Activated CD4-positive, alpha-beta memory T cell treated with anti-CD3 and anti-CD28 coated beads for 36 hours (primary cell): ENCODE measurements at regions of chr11 and their contacts with region 1.

Region 1: DNA sequence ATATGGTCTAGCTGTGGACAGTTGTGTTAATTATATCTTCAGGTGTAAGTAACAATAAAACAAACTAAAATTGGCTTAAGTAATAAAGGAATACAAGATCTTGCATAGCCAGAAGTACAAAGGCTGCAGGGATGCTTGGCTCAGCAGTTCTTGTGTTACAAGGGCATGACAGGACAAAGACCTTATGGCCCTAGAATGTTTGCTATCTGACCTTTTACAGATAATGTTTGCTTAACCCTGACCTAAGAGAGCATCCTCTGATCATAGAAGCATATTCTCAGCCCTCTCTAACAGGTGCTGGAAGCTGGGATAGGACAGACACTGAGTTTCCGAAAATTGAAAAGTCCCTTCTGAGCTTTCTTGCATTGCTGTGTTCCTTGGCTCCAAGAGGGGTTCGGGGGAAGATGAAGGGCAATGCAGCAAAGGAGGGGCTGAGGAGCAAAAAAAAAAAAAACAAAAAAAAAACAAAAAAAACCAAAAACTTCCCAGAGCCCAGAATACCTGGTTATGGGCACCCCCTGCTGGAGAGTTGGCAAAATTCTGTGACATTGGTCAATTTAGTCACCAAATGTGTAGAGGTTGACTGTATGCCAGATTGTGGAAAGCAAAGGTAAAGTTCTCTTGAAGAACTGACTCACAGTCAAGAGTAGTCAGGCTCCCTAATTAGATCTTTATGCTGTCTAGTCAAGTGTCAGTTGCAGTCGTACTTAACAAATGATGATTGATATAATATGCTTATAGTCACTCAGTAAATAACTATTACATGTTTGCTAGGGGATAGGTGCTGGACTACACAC is 10.4 kb upstream of the HIKESHI start:
- DNase-seq: peak; percentile 82
- H3K4me3 Mint-ChIP-seq: peak overlapping the region; percentile 30
- H3K27ac Mint-ChIP-seq: peak overlapping the region; percentile 95
- H3K4me1 Mint-ChIP-seq: peaks cover 68% of the 10 kb centered on the region
- H3K27me3 Mint-ChIP-seq: no peaks in the 10 kb centered on the region

Region 2: GRCh38 chr11:85854557-85855340 is 436.9 kb before region 1 on chr11:
- CTCF ChIA-PET with region 1: interaction called, 6 read pairs
- POLR2A ChIA-PET with region 1: interaction called, 3 read pairs
- intact Hi-C with region 1: loop called (anchors 2 kb)
- DNase-seq: peak; percentile 96
- H3K4me3 Mint-ChIP-seq: peak overlapping the region; percentile 86
- H3K27ac Mint-ChIP-seq: peak overlapping the region; percentile 87
- H3K4me1 Mint-ChIP-seq: peaks cover 10% of the 10 kb centered on the region
- H3K27me3 Mint-ChIP-seq: no peaks in the 10 kb centered on the region

Region 3: GRCh38 chr11:86014221-86014620 is 277.4 kb before region 1 on chr11:
- CTCF ChIA-PET with region 1: no interaction called
- POLR2A ChIA-PET with region 1: no interaction called
- intact Hi-C with region 1: no loop called
- DNase-seq: no peak
- H3K4me3 Mint-ChIP-seq: no peak overlapping the region
- H3K27ac Mint-ChIP-seq: peak overlapping the region; percentile 5
- H3K4me1 Mint-ChIP-seq: peaks cover 17% of the 10 kb centered on the region
- H3K27me3 Mint-ChIP-seq: no peaks in the 10 kb centered on the region

Region 4: GRCh38 chr11:86068951-86069407 is 222.7 kb before region 1 on chr11 and contains the start of gene PICALM:
- CTCF ChIA-PET with region 1: interaction called, 6 read pairs
- POLR2A ChIA-PET with region 1: interaction called, 6 read pairs
- intact Hi-C with region 1: loop called (anchors 1 kb)
- DNase-seq: peak; percentile 99
- H3K4me3 Mint-ChIP-seq: peak within 1 kb of the TSS; percentile 96
- H3K27ac Mint-ChIP-seq: peak within 1 kb of the TSS; percentile 88
- H3K4me1 Mint-ChIP-seq: peaks cover 25% of the 10 kb centered on the region
- H3K27me3 Mint-ChIP-seq: no peaks in the 10 kb centered on the region
- total RNA-seq, gene PICALM: 75.9 to 90.4 TPM

Region 5: GRCh38 chr11:86193297-86194095 is 98.2 kb before region 1 on chr11:
- CTCF ChIA-PET with region 1: interaction called, 10 read pairs
- POLR2A ChIA-PET with region 1: no interaction called
- intact Hi-C with region 1: no loop called
- DNase-seq: peak; percentile 72
- H3K4me3 Mint-ChIP-seq: peak overlapping the region; percentile 60
- H3K27ac Mint-ChIP-seq: peak overlapping the region; percentile 64
- H3K4me1 Mint-ChIP-seq: peaks cover 33% of the 10 kb centered on the region
- H3K27me3 Mint-ChIP-seq: peaks cover 6% of the 10 kb centered on the region

Region 6: DNA sequence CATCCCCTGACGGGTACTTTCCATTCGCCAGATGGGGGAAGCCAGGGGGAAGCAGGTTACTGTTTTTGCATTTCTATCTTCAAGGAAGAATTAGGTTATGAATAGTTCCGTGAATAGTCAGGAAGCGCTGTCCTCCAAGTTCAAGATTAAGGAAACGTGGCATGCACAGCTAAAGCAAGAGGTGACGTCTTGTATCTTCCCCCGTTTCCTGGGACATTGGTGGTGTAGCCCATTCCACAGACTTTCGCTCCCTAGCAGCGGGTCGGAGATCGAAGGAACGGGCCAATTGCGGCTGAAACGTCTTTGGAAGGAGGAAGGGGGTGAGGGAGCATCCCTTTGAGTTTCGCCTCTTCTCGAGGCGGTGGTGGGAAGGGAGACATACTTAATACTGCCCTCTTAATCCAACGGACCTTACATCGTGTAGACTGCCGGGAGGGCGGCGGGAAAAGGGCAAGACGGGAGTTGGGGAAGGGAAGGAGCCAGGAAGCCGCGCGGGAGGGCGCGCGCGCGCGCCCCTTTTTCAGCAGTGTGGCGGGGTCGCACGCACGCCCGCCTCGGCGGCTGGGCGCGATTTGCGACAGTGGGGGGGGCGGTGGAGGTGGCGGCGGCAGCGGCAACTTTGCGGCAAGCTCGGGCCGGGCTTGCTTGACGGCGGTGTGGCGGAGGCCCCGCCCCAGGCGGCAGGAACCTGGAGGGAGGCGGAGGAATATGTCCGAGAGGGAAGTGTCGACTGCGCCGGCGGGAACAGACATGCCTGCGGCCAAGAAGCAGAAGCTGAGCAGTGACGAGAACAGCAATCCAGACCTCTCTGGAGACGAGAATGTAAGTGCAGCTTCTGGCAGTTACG is 46.9 kb before region 1 on chr11 and contains the start of gene EED:
- CTCF ChIA-PET with region 1: interaction called, 6 read pairs
- POLR2A ChIA-PET with region 1: interaction called, 6 read pairs
- intact Hi-C with region 1: loop called (anchors 1 kb)
- DNase-seq: peak; percentile 96
- H3K4me3 Mint-ChIP-seq: no peak within 1 kb of the TSS
- H3K27ac Mint-ChIP-seq: no peak within 1 kb of the TSS
- H3K4me1 Mint-ChIP-seq: peaks cover 33% of the 10 kb centered on the region
- H3K27me3 Mint-ChIP-seq: no peaks in the 10 kb centered on the region
- total RNA-seq, gene EED: 170 TPM

Region 7: DNA sequence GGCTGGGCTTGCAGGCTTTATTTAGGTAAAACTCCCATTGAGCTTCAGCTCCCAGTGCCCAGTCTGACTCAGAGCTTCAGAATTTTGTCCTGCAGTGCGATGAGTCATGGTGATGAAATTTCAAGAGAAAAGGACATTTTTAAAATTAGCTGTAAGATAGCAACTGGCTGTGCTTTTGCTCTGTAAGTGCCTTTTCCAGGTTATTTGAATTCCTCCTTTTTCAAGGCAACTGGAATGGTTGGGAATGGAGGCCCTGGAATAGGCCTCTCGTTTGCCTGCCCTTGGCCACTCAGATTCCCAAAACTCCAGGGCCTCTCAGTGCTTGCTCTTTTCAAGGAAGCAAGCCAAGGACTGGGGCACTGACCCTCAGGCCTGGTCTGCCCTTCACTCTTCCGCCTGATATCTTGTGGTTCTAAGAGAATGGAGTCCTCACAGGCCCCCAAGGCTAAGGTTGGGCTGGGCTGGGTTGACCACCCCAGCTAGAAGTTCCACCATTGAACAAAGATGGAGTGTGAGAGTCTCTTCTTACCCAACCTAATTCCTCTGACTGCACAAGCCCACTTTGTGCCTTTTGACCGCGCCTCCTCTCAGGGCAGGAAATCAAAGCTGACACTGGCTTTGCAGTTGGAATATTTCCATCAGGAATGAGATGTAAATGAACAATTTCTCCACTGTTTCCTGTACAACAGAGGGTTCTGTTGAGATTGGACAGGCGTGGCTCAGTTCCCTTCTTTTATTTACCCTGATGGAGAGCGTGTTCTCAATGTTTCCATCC is 449.2 kb after region 1 on chr11:
- CTCF ChIA-PET with region 1: interaction called, 3 read pairs
- POLR2A ChIA-PET with region 1: no interaction called
- intact Hi-C with region 1: loop called (anchors 1 kb)
- DNase-seq: peak; percentile 55
- H3K4me3 Mint-ChIP-seq: no peak overlapping the region
- H3K27ac Mint-ChIP-seq: no peak overlapping the region
- H3K4me1 Mint-ChIP-seq: peaks cover 19% of the 10 kb centered on the region
- H3K27me3 Mint-ChIP-seq: peaks cover 4% of the 10 kb centered on the region